MCF 10A (cell line): ENCODE measurements at regions of chr5 and their contacts with region 1.

Region 1: DNA sequence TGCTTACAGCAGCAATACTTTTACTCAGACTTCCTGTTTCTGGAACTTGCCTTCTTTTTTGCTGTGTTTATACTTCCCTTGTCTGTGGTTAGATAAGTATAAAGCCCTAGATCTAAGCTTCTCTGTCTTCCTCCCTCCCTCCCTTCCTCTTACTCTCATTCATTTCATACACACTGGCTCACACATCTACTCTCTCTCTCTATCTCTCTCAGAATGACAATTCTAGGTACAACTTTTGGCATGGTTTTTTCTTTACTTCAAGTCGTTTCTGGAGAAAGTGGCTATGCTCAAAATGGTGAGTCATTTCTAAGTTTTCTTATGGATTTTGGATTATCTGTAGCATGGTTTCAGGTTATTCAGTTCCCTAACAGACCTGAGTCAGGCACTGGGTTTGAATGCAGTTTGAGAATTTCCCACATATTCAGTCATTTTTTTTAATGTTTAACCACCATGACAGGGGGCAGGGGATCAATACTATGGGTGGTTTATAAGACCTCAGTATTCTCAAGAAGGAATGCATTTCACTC is at the start of gene IL7R:
- DNase-seq: peak; percentile 14
- H3K4me3 Mint-ChIP-seq: no peak within 1 kb of the TSS
- H3K27ac Mint-ChIP-seq: peak within 1 kb of the TSS; percentile 4
- H3K4me1 Mint-ChIP-seq: peaks cover 53% of the 10 kb centered on the region
- H3K27me3 Mint-ChIP-seq: no peaks in the 10 kb centered on the region
- CTCF ChIP-seq: no peak
- total RNA-seq, gene IL7R: 0.26 and 0.44 TPM in 2 replicates

Region 2: DNA sequence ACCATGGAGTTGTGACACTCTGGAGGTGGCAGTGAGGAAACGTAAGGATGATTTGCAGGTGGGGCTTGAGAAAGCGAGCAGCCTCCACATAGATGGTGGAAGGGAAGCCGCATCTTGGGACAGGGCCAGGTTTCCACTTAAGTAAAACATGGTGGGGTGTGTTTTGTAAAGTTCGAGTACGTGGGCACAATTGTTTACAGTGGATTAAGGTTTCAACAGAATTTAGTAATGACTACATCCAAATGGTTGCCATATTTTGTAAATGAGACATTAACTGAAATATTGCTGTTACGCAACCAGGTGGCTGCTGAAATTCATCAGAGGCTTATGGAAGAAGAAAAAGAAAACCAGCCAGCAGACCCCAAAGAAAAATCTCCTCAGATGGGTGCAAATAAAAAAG is 85.5 kb before region 1 on chr5:
- CTCF ChIA-PET with region 1: interaction called, 6 read pairs
- POLR2A ChIA-PET with region 1: interaction called, 3 read pairs
- intact Hi-C with region 1: loop called (anchors 5 kb)
- DNase-seq: peak; percentile 96
- H3K4me3 Mint-ChIP-seq: peak overlapping the region; percentile 42
- H3K27ac Mint-ChIP-seq: peak overlapping the region; percentile 41
- H3K4me1 Mint-ChIP-seq: peaks cover 37% of the 10 kb centered on the region
- H3K27me3 Mint-ChIP-seq: no peaks in the 10 kb centered on the region
- CTCF ChIP-seq: no peak